CD14-positive monocyte (primary cell): ENCODE measurements at regions of chr7 and their contacts with region 1.

Region 1: DNA sequence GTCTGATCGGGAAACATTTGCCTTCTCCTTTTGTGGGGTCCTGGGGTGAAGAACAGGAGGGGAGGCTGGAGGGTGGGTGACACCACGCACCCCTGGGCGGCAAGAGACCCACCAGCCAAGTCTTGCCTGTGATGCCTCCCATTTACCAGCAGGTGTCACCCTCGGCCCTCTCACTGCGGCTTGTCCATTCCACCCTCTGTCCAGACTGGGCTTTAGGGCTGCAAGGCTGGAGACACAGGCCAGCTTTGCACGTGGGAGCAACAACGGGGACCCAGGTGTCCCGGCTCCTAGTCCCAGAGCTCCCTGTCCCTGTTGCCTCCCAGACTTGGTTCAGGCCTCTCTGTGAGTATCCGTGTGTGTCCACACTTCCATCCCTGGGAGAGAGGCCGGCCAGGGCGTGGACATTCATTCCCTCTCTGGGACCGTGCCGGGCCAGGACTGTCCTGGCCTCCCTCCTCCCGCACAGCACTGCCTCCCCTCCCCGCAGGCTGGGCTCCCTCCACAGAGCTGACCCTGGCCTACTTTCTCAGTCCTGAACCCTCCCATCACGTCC is 36.2 kb upstream of the GTF2IRD1 start:
- DNase-seq: peak; percentile 35 to 60 (median 60)
- H3K4me3 ChIP-seq: no peak overlapping the region
- H3K4me3 Mint-ChIP-seq: no peak overlapping the region
- H3K27ac ChIP-seq: no peak overlapping the region
- H3K27ac Mint-ChIP-seq: peak overlapping the region in 1 of 7 donors; percentile 53
- H3K4me1 ChIP-seq: no peaks in the 10 kb centered on the region
- H3K4me1 Mint-ChIP-seq: peaks cover 3% of the 10 kb centered on the region
- H3K27me3 ChIP-seq: no peaks in the 10 kb centered on the region
- H3K27me3 Mint-ChIP-seq: peaks cover 4 to 8% (median 6%) of the 10 kb centered on the region in 3 donors
- CTCF ChIP-seq: peak; percentile 96

Region 2: DNA sequence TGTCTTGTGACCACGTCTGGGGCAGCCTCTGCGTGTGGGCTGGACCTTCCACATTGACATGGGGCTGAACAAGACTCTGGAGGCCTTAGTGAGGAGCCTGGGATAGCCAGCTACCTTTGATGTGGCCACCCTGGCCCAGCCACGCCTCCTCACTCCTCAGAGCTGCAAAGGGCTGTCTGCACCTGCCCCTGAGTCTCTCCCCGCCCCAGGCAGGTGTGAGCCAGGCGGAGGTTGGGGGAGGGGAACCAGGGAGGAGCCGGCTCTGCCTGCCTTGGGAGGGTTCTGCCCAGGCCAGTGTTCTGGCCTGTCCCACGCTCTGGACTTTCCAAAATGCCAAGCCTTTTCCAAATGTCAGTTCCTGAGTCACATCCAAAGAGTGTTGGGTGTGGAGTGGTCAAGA is 108.4 kb after region 1 on chr7:
- intact Hi-C with region 1: no loop called
- DNase-seq: no peak
- H3K4me3 ChIP-seq: no peak overlapping the region
- H3K4me3 Mint-ChIP-seq: no peak overlapping the region
- H3K27ac ChIP-seq: no peak overlapping the region
- H3K27ac Mint-ChIP-seq: no peak overlapping the region
- H3K4me1 ChIP-seq: no peaks in the 10 kb centered on the region
- H3K4me1 Mint-ChIP-seq: no peaks in the 10 kb centered on the region
- H3K27me3 ChIP-seq: no peaks in the 10 kb centered on the region
- H3K27me3 Mint-ChIP-seq: no peaks in the 10 kb centered on the region
- CTCF ChIP-seq: no peak

Region 3: GRCh38 chr7:74569501-74570075 is 152.1 kb after region 1 on chr7:
- intact Hi-C with region 1: loop called in 1 of 2 experiments (anchors 1 kb)
- DNase-seq: no peak
- H3K4me3 ChIP-seq: no peak overlapping the region
- H3K4me3 Mint-ChIP-seq: no peak overlapping the region
- H3K27ac ChIP-seq: no peak overlapping the region
- H3K27ac Mint-ChIP-seq: peak overlapping the region in 1 of 7 donors; percentile 17
- H3K4me1 ChIP-seq: no peaks in the 10 kb centered on the region
- H3K4me1 Mint-ChIP-seq: no peaks in the 10 kb centered on the region
- H3K27me3 ChIP-seq: no peaks in the 10 kb centered on the region
- H3K27me3 Mint-ChIP-seq: peaks cover 0 to 2% (median 0%) of the 10 kb centered on the region in 3 donors
- CTCF ChIP-seq: no peak

Region 4: GRCh38 chr7:74637745-74638144 is 220.2 kb after region 1 on chr7:
- intact Hi-C with region 1: no loop called
- DNase-seq: no peak
- H3K4me3 ChIP-seq: no peak overlapping the region
- H3K4me3 Mint-ChIP-seq: no peak overlapping the region
- H3K27ac ChIP-seq: no peak overlapping the region
- H3K27ac Mint-ChIP-seq: no peak overlapping the region
- H3K4me1 ChIP-seq: peaks cover 8 to 11% of the 10 kb centered on the region in 2 donors
- H3K4me1 Mint-ChIP-seq: peaks cover 10% of the 10 kb centered on the region
- H3K27me3 ChIP-seq: no peaks in the 10 kb centered on the region
- H3K27me3 Mint-ChIP-seq: peaks cover 0 to 6% (median 3%) of the 10 kb centered on the region in 3 donors
- CTCF ChIP-seq: no peak

Region 5: GRCh38 chr7:74672343-74672915 is 254.9 kb after region 1 on chr7:
- intact Hi-C with region 1: loop called in 1 of 2 experiments (anchors 10 kb)
- DNase-seq: no peak
- H3K4me3 ChIP-seq: no peak overlapping the region
- H3K4me3 Mint-ChIP-seq: no peak overlapping the region
- H3K27ac ChIP-seq: no peak overlapping the region
- H3K27ac Mint-ChIP-seq: peak overlapping the region in 4 of 7 donors; percentile 10 to 53 (median 46)
- H3K4me1 ChIP-seq: no peaks in the 10 kb centered on the region
- H3K4me1 Mint-ChIP-seq: peaks cover 4% of the 10 kb centered on the region
- H3K27me3 ChIP-seq: no peaks in the 10 kb centered on the region
- H3K27me3 Mint-ChIP-seq: peaks cover 0 to 2% (median 0%) of the 10 kb centered on the region in 3 donors
- CTCF ChIP-seq: no peak

Region 6: GRCh38 chr7:75048435-75049379 is 631.2 kb after region 1 on chr7:
- intact Hi-C with region 1: loop called in 1 of 2 experiments (anchors 10 kb)
- DNase-seq: no peak
- H3K4me3 ChIP-seq: no peak overlapping the region
- H3K4me3 Mint-ChIP-seq: no peak overlapping the region
- H3K27ac ChIP-seq: no peak overlapping the region
- H3K27ac Mint-ChIP-seq: peak overlapping the region in 2 of 7 donors; percentile 24 to 31
- H3K4me1 ChIP-seq: no peaks in the 10 kb centered on the region
- H3K4me1 Mint-ChIP-seq: no peaks in the 10 kb centered on the region
- H3K27me3 ChIP-seq: no peaks in the 10 kb centered on the region
- H3K27me3 Mint-ChIP-seq: peaks cover 0 to 1% (median 1%) of the 10 kb centered on the region in 3 donors
- CTCF ChIP-seq: no peak